CD14-positive monocyte (primary cell): ENCODE measurements at regions of chr13 and their contacts with region 1.

Region 1: DNA sequence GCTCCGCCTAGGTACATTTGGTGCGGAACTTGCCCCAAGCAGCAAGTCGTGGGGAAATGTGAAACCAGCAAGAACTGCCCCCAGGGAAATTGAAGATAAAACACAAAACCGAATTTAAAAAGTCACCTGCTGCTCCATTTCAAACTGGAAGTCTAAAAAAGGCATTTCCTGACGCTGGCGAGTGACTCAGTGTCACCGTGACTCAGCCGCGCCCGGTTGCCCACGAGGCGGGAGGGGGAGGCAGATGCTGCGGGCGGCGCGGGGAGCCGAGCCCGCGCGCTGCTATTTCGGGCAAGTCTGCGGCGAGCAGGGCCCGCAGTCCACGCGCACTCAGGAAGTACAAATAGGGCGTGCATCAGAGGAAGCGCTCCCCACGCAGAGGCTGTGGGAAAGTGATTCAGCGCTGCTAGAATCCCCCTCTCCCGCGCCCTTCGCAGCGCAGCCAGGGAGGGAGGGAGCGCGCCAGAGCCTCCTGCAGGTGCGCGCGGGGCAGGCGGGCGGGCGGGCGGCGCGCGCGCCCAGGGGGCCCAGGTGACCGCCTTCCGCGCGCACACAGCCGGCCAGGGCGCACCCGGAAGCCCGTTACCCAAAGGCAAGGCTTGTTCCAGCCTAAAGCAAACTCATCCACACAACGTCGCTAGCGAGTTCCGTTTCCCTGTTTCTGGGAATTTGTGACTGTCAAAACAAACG is 168.8 kb downstream of the COL4A1 start:
- DNase-seq: peak; percentile 90 to 97 (median 93)
- H3K4me3 ChIP-seq: peak overlapping the region; percentile 63 to 79 (median 74)
- H3K4me3 Mint-ChIP-seq: peak overlapping the region; percentile 82 to 92
- H3K27ac ChIP-seq: peak overlapping the region; percentile 95 to 98
- H3K27ac Mint-ChIP-seq: peak overlapping the region; percentile 94 to 98 (median 97)
- H3K4me1 ChIP-seq: peaks cover 17 to 19% of the 10 kb centered on the region in 2 donors
- H3K4me1 Mint-ChIP-seq: peaks cover 20% of the 10 kb centered on the region
- H3K27me3 ChIP-seq: no peaks in the 10 kb centered on the region
- H3K27me3 Mint-ChIP-seq: peaks cover 0 to 5% (median 2%) of the 10 kb centered on the region in 3 donors
- CTCF ChIP-seq: no peak

Region 2: DNA sequence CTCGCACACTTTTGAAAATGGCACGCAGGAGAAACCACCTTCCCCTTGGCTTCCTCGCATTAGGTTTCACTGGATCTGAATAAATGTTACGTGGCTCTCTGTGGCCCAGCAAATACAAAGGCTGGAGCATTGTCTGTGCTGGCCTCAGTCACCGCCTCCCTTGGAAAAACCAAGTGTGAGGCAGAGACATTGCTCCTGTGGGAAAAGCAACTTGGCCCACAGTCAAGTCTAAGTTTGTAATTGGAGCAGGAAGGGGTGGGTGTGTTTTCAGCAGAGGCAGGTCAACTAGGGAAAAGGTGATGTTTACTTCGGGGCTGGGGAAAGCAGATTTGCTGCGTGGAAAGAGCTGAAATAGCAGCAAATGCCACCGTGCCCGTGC is 453.3 kb before region 1 on chr13:
- intact Hi-C with region 1: no loop called
- DNase-seq: no peak
- H3K4me3 ChIP-seq: no peak overlapping the region
- H3K4me3 Mint-ChIP-seq: no peak overlapping the region
- H3K27ac ChIP-seq: no peak overlapping the region
- H3K27ac Mint-ChIP-seq: peak overlapping the region in 2 of 7 donors; percentile 4 to 12
- H3K4me1 ChIP-seq: no peaks in the 10 kb centered on the region
- H3K4me1 Mint-ChIP-seq: no peaks in the 10 kb centered on the region
- H3K27me3 ChIP-seq: no peaks in the 10 kb centered on the region
- H3K27me3 Mint-ChIP-seq: peaks cover 4 to 6% (median 5%) of the 10 kb centered on the region in 3 donors
- CTCF ChIP-seq: no peak

Region 3: GRCh38 chr13:109778102-109778542 is 360.0 kb before region 1 on chr13:
- intact Hi-C with region 1: loop called in 1 of 2 experiments (anchors 10 kb)
- DNase-seq: peak in 2 of 3 donors; percentile 49 to 61
- H3K4me3 ChIP-seq: peak overlapping the region in 1 of 3 experiments; percentile 82
- H3K4me3 Mint-ChIP-seq: peak overlapping the region; percentile 24 to 89
- H3K27ac ChIP-seq: peak overlapping the region in 1 of 2 donors; percentile 15
- H3K27ac Mint-ChIP-seq: peak overlapping the region in 3 of 7 donors; percentile 37 to 61 (median 50)
- H3K4me1 ChIP-seq: peaks cover 47 to 67% of the 10 kb centered on the region in 2 donors
- H3K4me1 Mint-ChIP-seq: peaks cover 70% of the 10 kb centered on the region
- H3K27me3 ChIP-seq: no peaks in the 10 kb centered on the region
- H3K27me3 Mint-ChIP-seq: no peaks in the 10 kb centered on the region
- CTCF ChIP-seq: no peak

Region 4: DNA sequence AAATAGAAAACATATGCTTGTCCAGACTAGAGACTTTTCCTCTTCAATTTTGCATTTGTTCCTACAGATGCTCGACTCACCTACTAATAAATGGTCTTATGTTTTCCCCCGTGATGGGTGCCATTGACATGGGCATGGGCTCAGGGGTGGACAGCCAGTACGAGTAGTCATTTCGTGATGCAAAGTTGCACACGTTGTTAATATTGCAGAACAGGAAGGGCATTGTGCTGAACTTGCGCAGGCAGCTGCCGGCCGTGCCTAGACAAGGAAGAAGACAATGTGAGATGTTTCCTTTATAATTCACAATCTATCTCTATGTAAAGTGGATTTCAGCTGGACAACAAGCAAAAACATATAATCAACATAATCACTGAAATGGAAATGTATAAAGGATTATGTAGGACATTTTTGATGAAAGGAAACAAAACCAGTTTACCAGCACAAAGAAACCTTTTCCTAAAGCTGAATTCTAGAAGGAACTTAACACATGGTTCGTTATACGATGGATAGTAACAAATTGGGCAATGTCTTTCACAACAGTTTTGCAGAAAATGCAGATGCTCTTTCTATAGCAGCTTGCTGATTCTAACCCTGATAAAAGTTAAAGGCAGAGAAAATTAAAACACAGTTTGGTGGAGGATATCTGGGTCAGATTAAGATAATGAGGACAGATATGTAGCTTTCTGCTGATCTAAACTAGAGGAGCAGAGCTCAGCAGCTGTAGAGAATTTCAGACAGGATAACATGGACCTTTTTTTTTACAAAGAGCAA is 23.1 kb after region 1 on chr13:
- intact Hi-C with region 1: loop called (anchors 2 kb)
- DNase-seq: peak; percentile 88 to 91 (median 90)
- H3K4me3 ChIP-seq: peak overlapping the region in 1 of 3 experiments; percentile 45
- H3K4me3 Mint-ChIP-seq: peak overlapping the region; percentile 20 to 69
- H3K27ac ChIP-seq: peak overlapping the region; percentile 99
- H3K27ac Mint-ChIP-seq: peak overlapping the region; percentile 97 to 100 (median 98)
- H3K4me1 ChIP-seq: peaks cover 60 to 79% of the 10 kb centered on the region in 2 donors
- H3K4me1 Mint-ChIP-seq: peaks cover 51% of the 10 kb centered on the region
- H3K27me3 ChIP-seq: no peaks in the 10 kb centered on the region
- H3K27me3 Mint-ChIP-seq: peaks cover 0 to 2% (median 0%) of the 10 kb centered on the region in 3 donors
- CTCF ChIP-seq: no peak

Region 5: DNA sequence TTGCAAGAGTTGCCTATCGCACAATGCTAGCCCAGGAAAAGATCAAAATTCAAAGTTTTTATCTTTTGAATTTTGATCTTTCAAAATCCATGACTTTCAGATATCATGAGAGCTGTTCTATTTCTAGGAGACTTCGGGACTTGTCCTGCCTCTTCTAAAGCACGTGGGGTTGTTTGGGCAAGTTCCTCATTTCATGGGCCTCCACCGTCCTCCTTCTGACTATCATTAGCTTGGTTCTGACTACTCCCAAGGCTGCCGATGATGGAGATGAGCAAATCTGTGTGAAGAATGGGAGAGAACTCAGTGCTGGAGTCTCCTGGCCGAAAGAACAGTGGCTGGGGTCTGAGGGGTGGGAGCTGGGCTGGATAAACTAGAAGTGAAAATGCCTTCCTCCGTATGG is 82.3 kb after region 1 on chr13:
- intact Hi-C with region 1: loop called in 1 of 2 experiments (anchors 5 kb)
- DNase-seq: peak; percentile 27 to 45 (median 34)
- H3K4me3 ChIP-seq: no peak overlapping the region
- H3K4me3 Mint-ChIP-seq: peak overlapping the region in 1 of 2 donors; percentile 44
- H3K27ac ChIP-seq: no peak overlapping the region
- H3K27ac Mint-ChIP-seq: peak overlapping the region in 1 of 7 donors; percentile 38
- H3K4me1 ChIP-seq: peaks cover 6 to 8% of the 10 kb centered on the region in 2 donors
- H3K4me1 Mint-ChIP-seq: peaks cover 5% of the 10 kb centered on the region
- H3K27me3 ChIP-seq: peaks cover 0 to 8% of the 10 kb centered on the region in 2 donors
- H3K27me3 Mint-ChIP-seq: peaks cover 14 to 18% (median 14%) of the 10 kb centered on the region in 3 donors
- CTCF ChIP-seq: no peak